GM12878 (cell line): ENCODE measurements at regions of chr16 and their contacts with region 1.

Region 1: GRCh38 chr16:28211712-28212534 is at the start of gene XPO6:
- DNase-seq: no peak
- ATAC-seq: peak; percentile 92
- H3K4me3 ChIP-seq: peak within 1 kb of the TSS; percentile 94
- H3K27ac ChIP-seq: peak within 1 kb of the TSS; percentile 92
- H3K4me1 ChIP-seq: peaks cover 6% of the 10 kb centered on the region; the same call in 1 of the 2 replicates
- H3K27me3 ChIP-seq: no peaks in the 10 kb centered on the region
- CTCF ChIP-seq: no peak
- EP300 ChIP-seq: no peak
- POLR2A ChIP-seq: peak; percentile 76
- RAD21 ChIP-seq: 0 out of 2 replicates have a peak, but pooled peaks have one; percentile 4
- polyA plus RNA-seq, gene XPO6: 9.9 to 26.8 TPM

Region 2: GRCh38 chr16:27932542-27933135 is 279.3 kb before region 1 on chr16:
- CTCF ChIA-PET with region 1: no interaction called
- POLR2A ChIA-PET with region 1: no interaction called
- RAD21 ChIA-PET with region 1: no interaction called
- SMC1A ChIA-PET with region 1: no interaction called
- in situ Hi-C with region 1: no loop called
- intact Hi-C with region 1: no loop called
- DNase-seq: no peak
- ATAC-seq: no peak
- H3K4me3 ChIP-seq: no peak overlapping the region
- H3K27ac ChIP-seq: no peak overlapping the region
- H3K4me1 ChIP-seq: no peaks in the 10 kb centered on the region
- H3K27me3 ChIP-seq: no peaks in the 10 kb centered on the region; a peak in 2 of 4 replicates
- CTCF ChIP-seq: no peak
- EP300 ChIP-seq: no peak
- POLR2A ChIP-seq: no peak
- RAD21 ChIP-seq: no peak

Region 3: DNA sequence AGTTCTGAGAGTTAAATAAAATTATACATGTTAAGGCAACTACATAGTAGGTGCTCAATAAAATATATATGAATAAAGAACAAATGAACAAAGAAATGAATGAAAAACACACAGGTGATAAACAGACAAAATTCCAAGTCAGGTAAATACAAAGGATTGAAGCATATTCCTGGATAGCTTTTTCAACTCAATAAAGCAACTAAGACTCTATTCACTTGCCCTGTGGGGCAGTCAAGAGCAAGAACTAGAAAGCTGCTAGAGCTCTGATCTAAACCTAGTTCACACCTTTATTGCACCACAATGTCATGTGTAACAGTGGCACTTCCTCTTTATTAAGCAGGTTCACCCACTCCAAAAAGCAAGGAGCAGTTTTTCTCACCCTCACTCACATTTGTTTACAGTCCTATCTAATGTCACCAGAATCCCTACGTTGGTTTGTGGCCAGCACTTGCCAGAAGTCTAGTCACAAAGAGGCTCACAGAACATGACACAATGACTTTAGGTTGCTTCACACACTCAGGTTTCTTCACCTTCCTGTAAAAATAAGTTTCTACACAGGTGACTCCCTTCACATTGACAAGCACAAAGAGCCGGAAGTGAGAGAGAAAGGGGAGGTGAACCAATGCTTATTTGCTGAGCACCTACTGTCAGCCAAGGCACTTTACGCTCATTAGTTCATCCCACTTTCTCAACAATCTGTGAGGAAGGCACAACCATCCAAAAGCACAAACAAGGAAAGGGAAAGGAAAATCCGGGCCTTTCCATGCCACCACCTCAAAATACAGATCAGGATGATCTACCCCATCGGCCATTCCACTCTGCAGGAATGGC is 70.9 kb before region 1 on chr16:
- CTCF ChIA-PET with region 1: interaction called, 58 read pairs
- POLR2A ChIA-PET with region 1: interaction called, 9 read pairs
- RAD21 ChIA-PET with region 1: interaction called, 63 read pairs
- SMC1A ChIA-PET with region 1: interaction called, 105 read pairs
- in situ Hi-C with region 1: no loop called
- intact Hi-C with region 1: loop called (anchors 2 kb)
- DNase-seq: peak; percentile 90
- ATAC-seq: peak; percentile 89
- H3K4me3 ChIP-seq: peak overlapping the region; percentile 34; the same call in 1 of the 2 replicates
- H3K27ac ChIP-seq: peak overlapping the region; percentile 99
- H3K4me1 ChIP-seq: peaks cover 26% of the 10 kb centered on the region
- H3K27me3 ChIP-seq: no peaks in the 10 kb centered on the region
- CTCF ChIP-seq: peak; percentile 20 to 57 (median 36); a peak in 4 of 6 replicates
- EP300 ChIP-seq: peak; percentile 74 to 85; a peak in 3 of 4 replicates
- POLR2A ChIP-seq: peak; percentile 54; the same call in 1 of the 2 replicates
- RAD21 ChIP-seq: peak; percentile 38; the same call in 1 of the 2 replicates

Region 4: DNA sequence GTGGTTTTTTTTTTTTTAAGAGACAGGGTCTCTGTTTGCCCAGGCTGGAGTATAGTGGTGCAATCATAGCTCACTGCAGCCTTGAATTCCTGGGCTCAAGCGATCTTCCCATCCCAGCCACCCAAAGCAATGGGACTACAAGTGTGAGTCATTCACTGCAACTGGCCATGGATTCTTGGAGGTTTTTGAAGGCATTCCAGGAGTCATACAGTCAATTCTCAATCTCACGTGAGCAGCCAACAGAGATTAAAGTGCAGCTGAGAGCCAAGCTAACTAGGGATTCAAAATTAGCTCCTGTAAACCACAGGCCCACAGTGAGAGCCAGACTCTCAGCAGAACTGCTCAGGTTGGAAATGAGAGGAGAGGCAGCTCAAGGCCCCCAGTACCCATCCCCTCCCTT is 30.4 kb before region 1 on chr16:
- CTCF ChIA-PET with region 1: interaction called, 6 read pairs
- POLR2A ChIA-PET with region 1: interaction called, 71 read pairs
- RAD21 ChIA-PET with region 1: interaction called, 192 read pairs
- SMC1A ChIA-PET with region 1: interaction called, 272 read pairs
- in situ Hi-C with region 1: no loop called
- intact Hi-C with region 1: no loop called
- DNase-seq: no peak
- ATAC-seq: peak; percentile 48
- H3K4me3 ChIP-seq: peak overlapping the region; percentile 57; the same call in 1 of the 2 replicates
- H3K27ac ChIP-seq: peak overlapping the region; percentile 89
- H3K4me1 ChIP-seq: peaks cover 39% of the 10 kb centered on the region
- H3K27me3 ChIP-seq: no peaks in the 10 kb centered on the region
- CTCF ChIP-seq: no peak
- EP300 ChIP-seq: no peak
- POLR2A ChIP-seq: no peak
- RAD21 ChIP-seq: no peak

Region 5: DNA sequence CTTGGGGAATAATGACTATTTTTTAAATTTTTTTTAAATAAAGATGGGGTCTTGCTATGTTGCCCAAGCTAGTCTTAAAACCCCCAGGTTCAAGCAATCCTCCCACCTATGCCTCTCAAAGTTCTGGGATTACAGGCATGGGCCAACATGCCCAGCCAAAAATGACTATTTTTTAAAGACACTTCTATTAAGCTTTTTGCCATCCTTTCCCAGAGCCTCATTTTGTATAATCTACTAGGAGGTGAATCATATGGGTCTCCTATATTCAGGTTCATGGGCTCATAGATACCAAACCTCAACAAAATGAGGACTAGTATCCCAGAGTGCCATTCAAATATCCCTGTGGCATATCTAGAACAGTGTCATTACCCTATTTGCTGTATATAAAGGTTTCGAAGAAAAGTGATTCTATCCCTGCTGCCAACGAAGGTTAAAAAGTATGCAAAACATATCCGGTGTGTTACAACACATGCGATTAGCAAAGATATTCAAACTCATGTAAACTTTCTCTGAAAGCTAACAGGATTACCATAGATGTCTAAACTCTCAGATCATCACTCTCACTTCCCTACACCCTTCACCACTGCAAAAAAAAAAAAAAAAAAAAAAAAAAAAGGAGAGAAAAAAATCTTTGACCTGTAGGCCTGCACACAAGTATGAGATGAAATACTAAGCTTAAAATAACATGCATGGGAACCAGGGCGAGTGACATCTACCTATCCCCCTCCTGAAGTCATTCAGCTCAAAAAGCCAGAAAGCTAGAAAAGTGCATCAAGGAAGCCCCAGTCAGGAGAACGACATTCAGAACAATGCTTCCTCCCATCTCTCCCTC is 23.6 kb before region 1 on chr16:
- CTCF ChIA-PET with region 1: interaction called, 91 read pairs
- POLR2A ChIA-PET with region 1: interaction called, 71 read pairs
- RAD21 ChIA-PET with region 1: interaction called, 192 read pairs
- SMC1A ChIA-PET with region 1: interaction called, 272 read pairs
- in situ Hi-C with region 1: no loop called
- intact Hi-C with region 1: loop called (anchors 2 kb)
- DNase-seq: peak; percentile 91
- ATAC-seq: peak; percentile 79
- H3K4me3 ChIP-seq: peak overlapping the region; percentile 53
- H3K27ac ChIP-seq: peak overlapping the region; percentile 98
- H3K4me1 ChIP-seq: peaks cover 52% of the 10 kb centered on the region
- H3K27me3 ChIP-seq: no peaks in the 10 kb centered on the region
- CTCF ChIP-seq: no peak
- EP300 ChIP-seq: peak; percentile 40 to 82; a peak in 2 of 4 replicates
- POLR2A ChIP-seq: no peak
- RAD21 ChIP-seq: no peak

Region 6: DNA sequence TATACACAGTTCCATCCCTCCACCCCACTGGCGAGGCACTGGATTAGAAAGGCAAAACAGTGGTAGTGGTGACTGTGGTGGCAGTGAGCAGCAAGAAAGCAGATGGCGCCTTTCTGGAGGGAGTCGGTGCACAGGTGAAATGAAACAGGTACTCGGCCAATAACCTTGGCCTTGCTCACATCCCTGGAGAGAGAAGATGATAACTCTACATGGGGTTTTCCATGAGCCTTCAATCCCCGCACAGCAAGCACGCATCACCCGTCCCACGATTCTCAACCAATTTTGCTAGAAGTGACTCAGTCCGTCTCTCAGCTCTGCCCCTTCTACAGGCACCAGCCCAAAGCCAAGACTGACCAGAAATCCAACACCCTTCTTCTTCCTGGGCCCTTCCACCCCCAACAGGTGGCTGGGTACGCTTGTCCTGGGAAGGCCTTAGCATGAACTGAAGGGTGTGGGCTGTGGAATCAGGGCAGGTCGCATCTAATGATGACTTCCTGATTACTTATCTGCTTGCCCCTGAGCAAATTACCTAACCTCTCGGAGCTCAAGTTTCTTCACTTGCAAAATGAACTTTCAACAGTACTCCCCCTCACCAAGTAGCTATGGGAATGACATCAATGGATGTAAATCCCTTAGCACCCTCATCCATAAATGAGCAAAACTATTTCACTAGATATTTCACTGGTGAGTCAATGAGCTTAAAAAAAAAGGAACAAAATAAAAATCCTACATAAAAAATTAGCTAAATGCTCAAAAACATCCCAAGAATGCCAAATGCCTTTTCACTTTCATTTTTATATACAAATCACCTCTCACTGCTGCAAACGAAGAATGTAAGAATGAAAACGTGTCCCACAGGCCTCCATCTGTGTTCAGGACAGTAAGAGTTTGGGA is 18.1 kb before region 1 on chr16:
- CTCF ChIA-PET with region 1: interaction called, 91 read pairs
- POLR2A ChIA-PET with region 1: interaction called, 71 read pairs
- RAD21 ChIA-PET with region 1: interaction called, 192 read pairs
- SMC1A ChIA-PET with region 1: interaction called, 272 read pairs
- in situ Hi-C with region 1: no loop called
- intact Hi-C with region 1: loop called (anchors 1 kb)
- DNase-seq: no peak
- ATAC-seq: peak; percentile 52
- H3K4me3 ChIP-seq: peak overlapping the region; percentile 48; the same call in 1 of the 2 replicates
- H3K27ac ChIP-seq: peak overlapping the region; percentile 86
- H3K4me1 ChIP-seq: peaks cover 49% of the 10 kb centered on the region
- H3K27me3 ChIP-seq: no peaks in the 10 kb centered on the region
- CTCF ChIP-seq: no peak
- EP300 ChIP-seq: no peak
- POLR2A ChIP-seq: peak; percentile 10; the same call in 1 of the 2 replicates
- RAD21 ChIP-seq: no peak